CD14-positive monocyte (primary cell): ENCODE measurements at regions of chr17 and their contacts with region 1.

Region 1: GRCh38 chr17:71342737-71343136 is 778.1 kb upstream of the SOX9 start:
- DNase-seq: no peak
- H3K4me3 ChIP-seq: no peak overlapping the region
- H3K4me3 Mint-ChIP-seq: no peak overlapping the region
- H3K27ac ChIP-seq: no peak overlapping the region
- H3K27ac Mint-ChIP-seq: no peak overlapping the region
- H3K4me1 ChIP-seq: no peaks in the 10 kb centered on the region
- H3K4me1 Mint-ChIP-seq: no peaks in the 10 kb centered on the region
- H3K27me3 ChIP-seq: no peaks in the 10 kb centered on the region
- H3K27me3 Mint-ChIP-seq: no peaks in the 10 kb centered on the region
- CTCF ChIP-seq: no peak

Region 2: DNA sequence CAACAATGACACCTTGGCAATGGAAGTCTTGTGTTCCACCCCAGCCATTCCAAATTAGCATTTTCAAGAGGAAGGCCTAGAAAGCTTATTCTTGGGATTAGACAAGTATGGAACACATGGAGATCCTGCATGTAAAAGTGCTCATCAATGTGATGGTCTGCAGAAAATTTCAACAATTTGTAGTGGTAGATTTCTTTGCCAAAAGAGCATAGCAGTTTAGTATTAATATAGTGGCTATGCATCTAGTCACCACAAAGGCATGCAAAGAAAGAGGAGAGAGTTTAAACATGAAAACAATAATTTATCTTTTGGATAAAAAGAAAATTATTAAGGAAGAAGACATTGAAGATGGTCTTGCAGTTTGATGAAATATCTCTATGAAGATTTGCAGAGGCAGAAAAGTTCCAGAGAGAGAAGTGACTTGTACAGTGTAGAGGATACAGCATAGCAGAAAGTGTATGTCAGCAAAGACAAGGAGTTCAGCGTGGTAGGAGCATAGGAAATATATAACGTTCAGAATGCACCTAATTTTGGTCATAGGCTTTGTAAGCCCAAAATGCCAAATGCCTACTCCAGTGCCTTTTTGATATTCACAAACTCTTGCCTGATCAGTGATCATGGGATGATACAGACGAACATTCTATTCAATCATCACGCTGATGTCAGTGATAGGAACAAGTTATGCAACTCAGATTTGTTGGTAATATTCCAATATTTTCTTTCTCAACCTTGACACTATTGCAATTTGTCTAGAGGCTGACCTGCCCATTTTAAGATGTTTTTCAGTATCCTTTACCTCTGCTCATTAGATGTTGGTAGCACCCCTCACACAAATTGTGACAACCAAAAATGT is 50.2 kb after region 1 on chr17:
- intact Hi-C with region 1: loop called in 1 of 2 experiments (anchors 5 kb)
- DNase-seq: no peak
- H3K4me3 ChIP-seq: no peak overlapping the region
- H3K4me3 Mint-ChIP-seq: no peak overlapping the region
- H3K27ac ChIP-seq: no peak overlapping the region
- H3K27ac Mint-ChIP-seq: no peak overlapping the region
- H3K4me1 ChIP-seq: no peaks in the 10 kb centered on the region
- H3K4me1 Mint-ChIP-seq: no peaks in the 10 kb centered on the region
- H3K27me3 ChIP-seq: no peaks in the 10 kb centered on the region
- H3K27me3 Mint-ChIP-seq: no peaks in the 10 kb centered on the region
- CTCF ChIP-seq: no peak